ENCODE measurements at regions of chr17 and their contacts with region 1.

Region 1: DNA sequence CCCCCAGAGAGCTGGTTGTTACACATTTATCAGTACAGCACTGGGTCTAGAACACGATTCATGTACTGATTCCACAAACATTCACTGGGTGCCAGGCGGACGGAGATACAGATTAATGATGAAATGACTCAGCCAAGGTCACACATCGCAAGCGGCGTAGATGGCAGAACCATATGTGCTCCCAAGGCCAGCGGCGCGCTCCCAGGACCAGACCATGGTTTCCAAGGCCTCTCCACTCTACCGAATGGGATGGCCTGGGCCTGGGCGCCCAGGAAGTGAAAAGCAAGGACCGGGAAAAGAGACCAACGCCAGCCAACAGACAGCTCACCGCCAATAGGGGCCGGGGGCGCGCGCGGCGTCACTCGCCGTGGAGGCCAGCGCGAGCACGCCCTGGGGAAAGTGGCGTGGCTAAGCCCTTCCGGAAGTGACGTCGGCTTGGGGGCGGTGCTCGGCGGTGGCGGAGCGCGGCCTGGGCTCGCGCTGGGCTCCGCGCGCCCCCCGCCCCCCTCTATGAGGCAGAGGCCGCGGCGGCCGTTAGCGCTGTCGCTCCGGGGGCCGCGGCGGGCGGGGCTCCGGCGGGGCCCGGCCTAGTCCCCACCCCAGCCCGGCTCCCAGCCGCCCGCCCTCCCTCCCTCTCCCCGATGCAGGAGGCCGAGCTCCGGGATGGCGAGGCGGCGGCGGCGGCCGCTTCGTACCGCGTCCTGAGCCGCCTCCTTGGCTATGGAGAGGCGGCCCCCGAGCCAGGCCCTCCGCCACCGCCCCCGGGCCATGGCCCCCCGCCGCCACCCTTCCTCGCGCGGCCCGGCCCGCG is at the start of gene SOCS7:
- DNase-seq: peak; percentile 80 to 97 (median 94)
- ATAC-seq: peak; percentile 87
- H3K4me3 ChIP-seq: peak within 1 kb of the TSS; percentile 60 to 84
- H3K4me3 Mint-ChIP-seq: peak within 1 kb of the TSS; percentile 94
- H3K27ac ChIP-seq: peak within 1 kb of the TSS; percentile 56 to 90
- H3K27ac Mint-ChIP-seq: peak within 1 kb of the TSS; percentile 94
- H3K4me1 ChIP-seq: peaks cover 21% of the 10 kb centered on the region
- H3K4me1 Mint-ChIP-seq: peaks cover 43% of the 10 kb centered on the region
- H3K27me3 ChIP-seq: no peaks in the 10 kb centered on the region
- H3K27me3 Mint-ChIP-seq: no peaks in the 10 kb centered on the region
- CTCF ChIP-seq: no peak
- total RNA-seq, gene SOCS7: 10.6 to 11.4 TPM

Region 2: DNA sequence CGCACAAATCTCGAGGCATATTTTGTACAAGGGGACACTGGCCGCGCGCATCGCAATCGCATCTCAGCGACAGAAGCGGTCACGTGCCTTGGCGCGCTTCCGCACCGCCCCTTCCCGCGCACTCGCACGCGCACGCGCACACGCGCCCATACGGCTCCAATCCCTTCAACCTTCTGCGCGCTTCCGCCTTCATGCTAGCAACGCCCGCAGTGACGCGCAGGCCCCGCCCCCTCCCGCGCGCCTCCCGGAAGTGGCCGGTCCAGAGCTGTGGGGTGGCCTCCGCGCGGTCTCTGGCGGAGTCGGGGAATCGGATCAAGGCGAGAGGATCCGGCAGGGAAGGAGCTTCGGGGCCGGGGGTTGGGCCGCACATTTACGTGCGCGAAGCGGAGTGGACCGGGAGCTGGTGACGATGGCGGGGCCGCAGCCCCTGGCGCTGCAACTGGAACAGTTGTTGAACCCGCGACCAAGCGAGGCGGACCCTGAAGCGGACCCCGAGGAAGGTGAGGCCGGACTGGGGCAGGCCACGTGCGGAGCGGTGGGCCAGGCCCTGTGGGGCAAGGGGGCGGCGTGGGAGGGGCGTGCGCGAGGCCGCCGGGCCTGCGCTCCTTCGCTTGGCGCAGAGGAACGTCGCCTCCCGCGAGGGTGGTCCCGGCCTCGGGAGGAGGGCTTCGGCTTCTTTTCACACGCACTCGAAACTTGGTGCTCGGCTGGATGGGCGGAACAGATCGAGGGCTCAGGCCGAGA is 1402.7 kb before region 1 on chr17 and contains the start of gene AATF:
- CTCF ChIA-PET with region 1: no interaction called
- POLR2A ChIA-PET with region 1: no interaction called
- intact Hi-C with region 1: loop called in 1 of 2 experiments (anchors 10 kb)
- DNase-seq: peak; percentile 82 to 99 (median 96)
- ATAC-seq: peak; percentile 91
- H3K4me3 ChIP-seq: peak within 1 kb of the TSS; percentile 81 to 91
- H3K4me3 Mint-ChIP-seq: peak within 1 kb of the TSS; percentile 98
- H3K27ac ChIP-seq: peak within 1 kb of the TSS; percentile 88 to 90
- H3K27ac Mint-ChIP-seq: peak within 1 kb of the TSS; percentile 98
- H3K4me1 ChIP-seq: peaks cover 26% of the 10 kb centered on the region
- H3K4me1 Mint-ChIP-seq: peaks cover 60% of the 10 kb centered on the region
- H3K27me3 ChIP-seq: peaks cover 28 to 34% of the 10 kb centered on the region in 2 experiments
- H3K27me3 Mint-ChIP-seq: peaks cover 31% of the 10 kb centered on the region
- CTCF ChIP-seq: no peak
- total RNA-seq, gene AATF: 49.5 to 51.5 TPM

Region 3: DNA sequence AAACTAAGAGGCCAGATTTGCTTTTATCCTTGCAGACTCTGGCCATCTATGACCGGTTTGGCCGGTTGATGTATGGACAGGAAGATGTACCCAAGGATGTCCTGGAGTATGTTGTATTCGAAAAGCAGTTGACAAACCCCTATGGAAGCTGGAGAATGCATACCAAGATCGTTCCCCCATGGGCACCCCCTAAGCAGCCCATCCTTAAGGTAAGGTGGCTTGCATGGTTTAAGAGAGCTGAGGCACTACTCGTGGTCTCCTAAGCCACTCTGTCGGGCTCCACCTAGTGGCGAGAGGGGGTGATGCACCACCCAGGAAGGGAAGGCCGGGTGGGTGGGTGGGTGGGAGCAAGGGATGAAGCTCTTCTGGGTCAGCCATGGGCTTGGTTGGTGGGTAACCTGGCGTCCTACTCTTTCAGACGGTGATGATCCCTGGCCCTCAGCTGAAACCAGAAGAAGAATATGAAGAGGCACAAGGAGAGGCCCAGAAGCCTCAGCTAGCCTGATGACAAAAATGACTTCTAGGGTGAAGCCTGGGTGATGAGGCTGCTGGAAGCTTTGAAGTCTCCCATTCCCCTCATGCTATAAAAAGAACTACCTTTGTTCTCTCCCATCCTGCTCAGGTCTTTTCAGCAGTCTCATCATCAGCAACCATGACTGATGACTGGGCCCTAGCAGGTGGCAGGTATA is 29.4 kb before region 1 on chr17:
- CTCF ChIA-PET with region 1: interaction called, 17 read pairs
- POLR2A ChIA-PET with region 1: interaction called, 3 read pairs
- intact Hi-C with region 1: no loop called
- DNase-seq: peak; percentile 49 to 82 (median 70)
- ATAC-seq: peak; percentile 92
- H3K4me3 ChIP-seq: no peak overlapping the region
- H3K4me3 Mint-ChIP-seq: no peak overlapping the region
- H3K27ac ChIP-seq: no peak overlapping the region
- H3K27ac Mint-ChIP-seq: no peak overlapping the region
- H3K4me1 ChIP-seq: no peaks in the 10 kb centered on the region
- H3K4me1 Mint-ChIP-seq: peaks cover 8% of the 10 kb centered on the region
- H3K27me3 ChIP-seq: no peaks in the 10 kb centered on the region
- H3K27me3 Mint-ChIP-seq: no peaks in the 10 kb centered on the region
- CTCF ChIP-seq: peak; percentile 79

Region 4: DNA sequence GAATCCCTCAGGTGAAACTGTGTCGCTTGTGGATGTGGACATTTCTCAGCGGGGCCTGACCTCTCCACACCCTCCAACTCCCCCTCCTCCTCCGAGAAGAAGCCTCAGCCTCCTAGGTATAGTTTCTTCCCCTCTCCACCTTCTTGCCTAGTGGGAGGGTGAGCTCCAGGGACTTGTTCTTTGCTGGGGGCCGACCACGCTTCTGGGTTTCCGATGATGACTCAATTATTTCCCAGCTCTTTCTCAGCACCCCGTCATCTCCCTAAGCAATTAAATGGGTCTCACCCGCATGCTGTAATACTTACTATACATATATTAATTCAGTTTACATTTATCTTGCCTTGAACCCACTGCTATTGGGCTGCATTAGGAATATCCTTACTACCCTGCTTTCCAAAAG is 13.1 kb after region 1 on chr17:
- CTCF ChIA-PET with region 1: interaction called, 21 read pairs
- POLR2A ChIA-PET with region 1: interaction called, 4 read pairs
- intact Hi-C with region 1: no loop called
- DNase-seq: no peak
- ATAC-seq: no peak
- H3K4me3 ChIP-seq: no peak overlapping the region
- H3K4me3 Mint-ChIP-seq: no peak overlapping the region
- H3K27ac ChIP-seq: no peak overlapping the region
- H3K27ac Mint-ChIP-seq: no peak overlapping the region
- H3K4me1 ChIP-seq: no peaks in the 10 kb centered on the region
- H3K4me1 Mint-ChIP-seq: peaks cover 9% of the 10 kb centered on the region
- H3K27me3 ChIP-seq: no peaks in the 10 kb centered on the region
- H3K27me3 Mint-ChIP-seq: no peaks in the 10 kb centered on the region
- CTCF ChIP-seq: no peak

Region 5: GRCh38 chr17:38403491-38403890 is 51.9 kb after region 1 on chr17:
- CTCF ChIA-PET with region 1: interaction called, 14 read pairs
- POLR2A ChIA-PET with region 1: no interaction called
- intact Hi-C with region 1: no loop called
- DNase-seq: no peak
- ATAC-seq: no peak
- H3K4me3 ChIP-seq: no peak overlapping the region
- H3K4me3 Mint-ChIP-seq: no peak overlapping the region
- H3K27ac ChIP-seq: no peak overlapping the region
- H3K27ac Mint-ChIP-seq: no peak overlapping the region
- H3K4me1 ChIP-seq: no peaks in the 10 kb centered on the region
- H3K4me1 Mint-ChIP-seq: no peaks in the 10 kb centered on the region
- H3K27me3 ChIP-seq: no peaks in the 10 kb centered on the region
- H3K27me3 Mint-ChIP-seq: no peaks in the 10 kb centered on the region
- CTCF ChIP-seq: no peak

Region 6: DNA sequence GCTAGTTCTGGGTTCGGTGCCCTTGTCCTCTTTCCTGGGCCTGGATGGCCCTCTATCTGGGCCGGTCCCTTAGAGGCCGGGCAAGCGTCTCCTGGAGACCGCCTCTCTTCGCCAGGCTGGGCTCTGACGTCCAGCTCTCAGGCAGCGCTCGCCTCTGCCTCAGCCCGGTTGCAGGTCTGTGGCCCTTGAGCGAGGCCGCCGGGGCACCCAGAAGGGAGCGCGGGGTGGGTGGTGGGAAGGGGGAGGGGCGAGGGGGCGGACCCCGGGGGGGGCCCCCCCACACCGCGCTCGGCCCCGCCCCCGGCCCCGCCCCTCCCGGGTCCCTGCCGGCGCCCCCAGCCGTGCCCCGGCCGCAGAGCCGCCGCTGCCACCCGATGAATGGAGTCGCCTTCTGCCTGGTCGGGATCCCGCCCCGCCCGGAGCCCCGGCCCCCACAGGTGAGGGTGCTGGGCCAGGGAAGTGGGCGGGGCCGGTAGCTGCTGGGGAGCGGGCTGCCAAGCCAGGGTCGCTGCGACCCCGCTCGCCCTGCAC is 76.6 kb after region 1 on chr17 and contains the start of gene ARHGAP23:
- CTCF ChIA-PET with region 1: interaction called, 320 read pairs
- POLR2A ChIA-PET with region 1: no interaction called
- intact Hi-C with region 1: no loop called
- DNase-seq: peak in 6 of 9 experiments; percentile 16 to 58 (median 34)
- ATAC-seq: peak; percentile 68
- H3K4me3 ChIP-seq: peak within 1 kb of the TSS; percentile 37 to 52
- H3K4me3 Mint-ChIP-seq: peak within 1 kb of the TSS; percentile 80
- H3K27ac ChIP-seq: no peak within 1 kb of the TSS
- H3K27ac Mint-ChIP-seq: no peak within 1 kb of the TSS
- H3K4me1 ChIP-seq: peaks cover 9% of the 10 kb centered on the region
- H3K4me1 Mint-ChIP-seq: peaks cover 17% of the 10 kb centered on the region
- H3K27me3 ChIP-seq: peaks cover 5 to 17% of the 10 kb centered on the region in 2 experiments
- H3K27me3 Mint-ChIP-seq: peaks cover 17% of the 10 kb centered on the region
- CTCF ChIP-seq: no peak
- total RNA-seq, gene ARHGAP23: 0.30 to 0.33 TPM

Region 7: DNA sequence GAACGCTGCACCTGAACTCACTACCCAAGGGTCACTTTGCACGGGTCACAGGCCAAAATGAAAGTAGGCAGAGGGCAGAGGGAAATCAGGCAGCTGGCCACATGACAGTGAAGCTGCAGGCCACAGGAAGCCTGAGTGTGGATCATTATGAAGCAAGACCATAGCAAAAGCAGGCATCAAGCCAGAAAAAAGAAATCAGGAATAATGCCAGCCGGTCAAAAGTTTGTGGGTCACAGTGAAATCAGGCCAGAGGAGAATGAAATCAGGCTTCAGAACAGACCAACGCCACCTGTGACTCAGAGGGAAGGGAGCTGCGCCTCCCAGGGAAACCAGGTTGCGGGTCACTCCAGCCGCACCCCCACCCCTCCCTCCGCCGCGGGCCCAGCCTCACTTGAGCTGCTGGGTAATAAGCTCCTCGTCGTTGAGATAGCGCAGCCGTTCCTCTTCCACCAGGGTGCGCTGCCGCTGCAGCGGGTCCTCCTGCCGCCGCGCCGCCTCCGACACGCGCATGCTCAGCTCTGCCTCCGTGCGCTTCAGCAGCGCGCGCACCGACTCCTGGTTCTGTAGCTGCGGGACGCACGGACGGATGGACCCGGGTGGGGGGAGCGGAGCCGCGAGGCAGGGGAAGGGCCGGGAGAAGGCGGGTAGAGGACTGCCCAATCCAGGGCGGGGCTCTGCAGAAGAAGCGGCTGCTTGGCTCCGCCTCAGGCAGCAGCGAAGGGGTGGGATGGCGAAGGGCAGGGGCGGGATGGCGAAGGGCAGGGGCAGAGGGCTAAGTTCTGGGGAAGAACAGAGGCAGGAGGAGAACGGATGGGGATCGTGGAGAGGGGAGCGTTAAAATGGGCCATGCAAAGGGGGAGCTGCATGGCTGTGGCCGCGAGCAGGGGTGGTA is 206.5 kb after region 1 on chr17:
- CTCF ChIA-PET with region 1: no interaction called
- POLR2A ChIA-PET with region 1: no interaction called
- intact Hi-C with region 1: loop called in 1 of 2 experiments (anchors 5 kb)
- DNase-seq: peak; percentile 75 to 94 (median 88)
- ATAC-seq: peak; percentile 74
- H3K4me3 ChIP-seq: peak overlapping the region; percentile 60 to 77
- H3K4me3 Mint-ChIP-seq: peak overlapping the region; percentile 92
- H3K27ac ChIP-seq: no peak overlapping the region
- H3K27ac Mint-ChIP-seq: no peak overlapping the region
- H3K4me1 ChIP-seq: peaks cover 28% of the 10 kb centered on the region
- H3K4me1 Mint-ChIP-seq: peaks cover 26% of the 10 kb centered on the region
- H3K27me3 ChIP-seq: peaks cover 17 to 27% of the 10 kb centered on the region in 2 experiments
- H3K27me3 Mint-ChIP-seq: peaks cover 24% of the 10 kb centered on the region
- CTCF ChIP-seq: peak; percentile 93

Region 8: GRCh38 chr17:39018267-39019134 is 666.9 kb after region 1 on chr17:
- CTCF ChIA-PET with region 1: no interaction called
- POLR2A ChIA-PET with region 1: no interaction called
- intact Hi-C with region 1: no loop called
- DNase-seq: no peak
- ATAC-seq: no peak
- H3K4me3 ChIP-seq: no peak overlapping the region
- H3K4me3 Mint-ChIP-seq: no peak overlapping the region
- H3K27ac ChIP-seq: no peak overlapping the region
- H3K27ac Mint-ChIP-seq: peak overlapping the region; percentile 66
- H3K4me1 ChIP-seq: peaks cover 31% of the 10 kb centered on the region
- H3K4me1 Mint-ChIP-seq: peaks cover 27% of the 10 kb centered on the region
- H3K27me3 ChIP-seq: no peaks in the 10 kb centered on the region
- H3K27me3 Mint-ChIP-seq: no peaks in the 10 kb centered on the region
- CTCF ChIP-seq: no peak

Measured in CD8-positive, alpha-beta T cell (primary cell).